IMR-90 (cell line): ENCODE measurements at regions of chr22 and their contacts with region 1.

Region 1: DNA sequence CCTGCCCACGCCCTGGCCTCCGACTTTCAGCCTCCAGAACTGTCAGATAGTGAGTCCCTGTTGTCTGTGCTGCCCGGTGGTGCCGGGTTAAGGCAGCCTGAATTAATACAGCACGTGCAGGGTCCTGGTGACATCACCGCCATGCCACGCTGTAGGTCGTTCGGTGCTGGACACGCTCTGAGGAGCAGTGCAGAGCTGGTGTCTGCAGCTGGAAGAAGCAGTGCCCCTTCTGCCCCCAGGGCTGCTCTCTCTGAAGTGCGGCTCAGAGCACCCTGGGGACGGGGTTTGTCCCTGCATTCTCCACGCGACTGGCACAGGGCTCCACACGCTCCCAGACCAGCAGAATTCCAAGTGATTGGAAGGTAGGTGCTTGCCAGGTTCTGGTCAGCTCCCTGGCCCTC is 831.5 kb downstream of the TBC1D22A start:
- DNase-seq: no peak
- ATAC-seq: no peak
- H3K4me3 ChIP-seq: no peak overlapping the region
- H3K27ac ChIP-seq: no peak overlapping the region
- H3K4me1 ChIP-seq: no peaks in the 10 kb centered on the region
- H3K27me3 ChIP-seq: no peaks in the 10 kb centered on the region
- CTCF ChIP-seq: no peak
- POLR2A ChIP-seq: no peak
- RAD21 ChIP-seq: no peak

Region 2: GRCh38 chr22:45615364-45615763 is 1978.5 kb before region 1 on chr22:
- CTCF ChIA-PET with region 1: no interaction called
- POLR2A ChIA-PET with region 1: no interaction called
- dilution Hi-C with region 1: no loop called
- in situ Hi-C with region 1: loop called (anchors 5 kb)
- intact Hi-C with region 1: no loop called
- DNase-seq: no peak
- ATAC-seq: no peak
- H3K4me3 ChIP-seq: no peak overlapping the region
- H3K27ac ChIP-seq: no peak overlapping the region
- H3K4me1 ChIP-seq: peaks cover 4% of the 10 kb centered on the region; the same call in 1 of the 2 replicates
- H3K27me3 ChIP-seq: no peaks in the 10 kb centered on the region
- CTCF ChIP-seq: no peak
- POLR2A ChIP-seq: no peak
- RAD21 ChIP-seq: no peak

Region 3: GRCh38 chr22:47802446-47802845 is 208.5 kb after region 1 on chr22:
- CTCF ChIA-PET with region 1: no interaction called
- POLR2A ChIA-PET with region 1: no interaction called
- dilution Hi-C with region 1: no loop called
- in situ Hi-C with region 1: no loop called
- intact Hi-C with region 1: no loop called
- DNase-seq: no peak
- ATAC-seq: no peak
- H3K4me3 ChIP-seq: no peak overlapping the region
- H3K27ac ChIP-seq: no peak overlapping the region
- H3K4me1 ChIP-seq: no peaks in the 10 kb centered on the region
- H3K27me3 ChIP-seq: no peaks in the 10 kb centered on the region
- CTCF ChIP-seq: no peak
- POLR2A ChIP-seq: no peak
- RAD21 ChIP-seq: no peak

Region 4: DNA sequence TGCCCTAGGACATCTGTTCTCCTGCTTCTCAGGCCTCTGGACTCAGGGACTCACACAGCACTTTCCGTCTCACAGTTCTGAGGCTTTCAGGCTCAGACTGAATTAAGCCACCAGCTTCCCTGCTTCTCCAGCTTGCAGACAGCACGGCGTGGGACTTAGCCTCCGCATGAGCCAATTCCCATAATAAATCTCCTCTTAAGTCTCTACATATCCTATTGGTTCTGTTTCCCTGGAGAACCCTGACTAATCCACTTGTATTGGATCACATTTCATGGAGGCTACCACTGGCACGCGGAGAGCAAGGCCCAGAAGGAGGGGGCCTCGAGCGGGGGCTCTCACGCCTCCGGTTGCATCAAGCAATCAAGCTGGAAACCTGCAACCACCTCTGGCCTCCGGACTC is 482.1 kb after region 1 on chr22:
- CTCF ChIA-PET with region 1: no interaction called
- POLR2A ChIA-PET with region 1: no interaction called
- dilution Hi-C with region 1: no loop called
- in situ Hi-C with region 1: no loop called
- intact Hi-C with region 1: no loop called
- DNase-seq: no peak
- ATAC-seq: no peak
- H3K4me3 ChIP-seq: no peak overlapping the region
- H3K27ac ChIP-seq: no peak overlapping the region
- H3K4me1 ChIP-seq: no peaks in the 10 kb centered on the region
- H3K27me3 ChIP-seq: no peaks in the 10 kb centered on the region
- CTCF ChIP-seq: no peak
- POLR2A ChIP-seq: no peak
- RAD21 ChIP-seq: no peak